PC-3 (cell line): ENCODE measurements at regions of chr2 and their contacts with region 1.

Region 1: DNA sequence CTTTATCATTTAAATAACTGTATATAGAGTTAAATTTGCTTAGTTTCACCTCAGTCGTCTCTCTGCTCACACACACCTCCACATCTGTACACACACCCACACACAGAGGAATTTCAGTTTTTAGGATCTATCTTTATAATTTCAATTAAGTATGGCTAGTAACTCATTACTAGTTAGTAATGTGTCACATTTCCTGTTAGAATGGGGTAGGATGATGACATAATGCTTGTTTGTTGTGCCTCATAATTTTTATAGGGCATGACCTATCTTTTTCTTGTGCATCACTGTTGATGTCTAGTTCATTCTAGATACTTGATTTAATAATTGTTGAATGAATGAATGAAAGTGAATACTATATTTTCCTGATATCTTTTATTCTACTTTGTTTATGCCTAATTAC is 108.6 kb downstream of the AGPS start:
- DNase-seq: no peak
- ATAC-seq: no peak
- H3K4me3 ChIP-seq: no peak overlapping the region
- H3K27ac ChIP-seq: no peak overlapping the region
- H3K4me1 ChIP-seq: no peaks in the 10 kb centered on the region
- H3K27me3 ChIP-seq: no peaks in the 10 kb centered on the region
- CTCF ChIP-seq: no peak

Region 2: DNA sequence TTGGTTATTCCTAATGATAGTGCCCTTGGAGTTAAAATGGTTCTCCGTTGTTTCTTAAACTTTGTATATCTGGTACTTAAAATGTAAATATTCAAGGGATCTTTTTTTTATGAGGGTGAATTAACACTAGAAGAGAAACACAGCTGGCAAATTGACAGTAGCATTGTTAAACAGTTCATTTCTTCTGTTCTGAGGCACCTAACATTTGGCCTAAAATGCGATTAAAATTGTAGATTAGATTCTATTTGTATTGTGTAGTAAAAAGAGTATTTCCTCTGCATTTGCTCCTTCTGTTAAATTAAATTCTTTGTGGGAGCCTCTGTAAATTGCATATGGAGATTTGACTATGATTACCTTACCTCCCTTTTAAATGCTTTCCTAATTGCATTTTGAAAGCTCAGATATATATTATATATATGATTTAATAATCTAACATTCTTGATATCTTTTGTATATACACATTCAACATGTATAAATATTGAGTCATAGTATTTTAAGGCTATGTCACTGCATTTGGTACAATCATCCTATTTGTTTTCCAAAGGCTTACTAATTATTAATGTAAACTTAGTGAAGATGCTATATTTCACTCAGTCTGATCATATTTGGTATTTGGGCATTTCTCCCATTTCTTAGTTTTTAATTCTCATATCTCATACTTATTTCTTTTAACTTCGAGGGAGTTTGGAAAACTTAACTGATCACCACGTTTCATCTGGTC is 15.8 kb after region 1 on chr2:
- CTCF ChIA-PET with region 1: no interaction called
- POLR2A ChIA-PET with region 1: no interaction called
- intact Hi-C with region 1: loop called (anchors 2 kb)
- DNase-seq: peak; percentile 56
- ATAC-seq: peak; percentile 89
- H3K4me3 ChIP-seq: no peak overlapping the region
- H3K27ac ChIP-seq: peak overlapping the region; percentile 17; the same call in 1 of the 2 replicates
- H3K4me1 ChIP-seq: peaks cover 14% of the 10 kb centered on the region
- H3K27me3 ChIP-seq: no peaks in the 10 kb centered on the region
- CTCF ChIP-seq: no peak